Dorsolateral prefrontal cortex (tissue), 120 donors: ENCODE measurements at regions of chr19 and their contacts with region 1.

Region 1: DNA sequence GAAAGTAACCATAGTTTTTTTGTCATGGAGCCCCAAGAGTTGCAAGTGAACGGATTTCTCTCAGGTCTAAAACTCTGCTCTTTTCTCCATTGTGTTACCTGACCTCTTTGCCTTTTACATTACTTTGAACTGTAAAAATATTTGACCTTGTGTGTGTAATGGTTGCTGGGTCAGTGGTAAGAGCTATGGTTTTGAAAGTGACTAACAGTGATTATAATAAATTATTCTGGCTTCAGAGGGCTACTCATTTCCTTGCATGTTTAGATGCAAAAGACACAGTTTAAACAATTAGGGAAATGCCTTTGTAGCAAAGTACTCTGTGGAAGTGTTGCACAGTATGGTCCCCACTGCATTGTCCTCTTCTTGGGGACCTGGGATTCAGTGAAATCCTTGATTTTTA is 29.3 kb upstream of the PSG8 start:
- DNase-seq: no peak
- H3K4me3 ChIP-seq: no peak overlapping the region
- H3K27ac ChIP-seq: no peak overlapping the region
- H3K27me3 ChIP-seq: no peaks in the 10 kb centered on the region
- CTCF ChIP-seq: no peak

Region 2: GRCh38 chr19:42295831-42296525 is 498.8 kb before region 1 on chr19:
- intact Hi-C with region 1: no loop called
- DNase-seq: peak; percentile 79 to 90 (median 84)
- H3K4me3 ChIP-seq: no peak overlapping the region
- H3K27ac ChIP-seq: peak overlapping the region in 23 of 59 donors; percentile 3 to 68 (median 36)
- H3K27me3 ChIP-seq: no peaks in the 10 kb centered on the region
- CTCF ChIP-seq: peak; percentile 53 to 99 (median 92)

Region 3: GRCh38 chr19:42857561-42857901 is 62.8 kb after region 1 on chr19:
- intact Hi-C with region 1: loop called (anchors 1 to 2 kb)
- DNase-seq: no peak
- H3K4me3 ChIP-seq: no peak overlapping the region
- H3K27ac ChIP-seq: peak overlapping the region in 1 of 59 donors; percentile 16
- H3K27me3 ChIP-seq: no peaks in the 10 kb centered on the region
- CTCF ChIP-seq: peak in 12 of 56 donors; percentile 1 to 26 (median 8)

Region 4: DNA sequence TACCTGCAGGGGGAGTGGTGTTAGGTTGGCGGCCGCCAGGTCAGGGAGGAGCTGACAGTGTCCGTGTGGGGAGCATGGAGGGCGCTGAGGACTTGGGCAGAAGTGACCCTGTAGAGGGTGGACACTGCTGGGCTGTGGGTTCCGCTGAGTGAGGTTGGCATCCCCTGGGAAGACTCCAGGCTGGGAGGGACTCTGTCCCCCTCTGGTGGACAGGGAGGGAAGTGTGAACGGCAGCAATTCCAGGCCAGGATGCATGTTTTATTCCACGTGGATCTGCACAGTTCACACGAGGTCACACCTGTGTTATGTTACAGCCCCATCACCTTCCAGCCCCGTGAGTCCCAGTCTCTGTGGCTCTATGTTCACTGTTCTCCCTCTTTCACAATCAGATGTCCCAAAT is 86.5 kb after region 1 on chr19:
- intact Hi-C with region 1: loop called in 1 of 2 experiments (anchors 10 kb)
- DNase-seq: no peak
- H3K4me3 ChIP-seq: no peak overlapping the region
- H3K27ac ChIP-seq: no peak overlapping the region
- H3K27me3 ChIP-seq: no peaks in the 10 kb centered on the region
- CTCF ChIP-seq: peak in 34 of 56 donors; percentile 10 to 50 (median 31)

Region 5: GRCh38 chr19:43080186-43080585 is 285.4 kb after region 1 on chr19:
- intact Hi-C with region 1: loop called in 1 of 2 experiments (anchors 10 kb)
- DNase-seq: no peak
- H3K4me3 ChIP-seq: no peak overlapping the region
- H3K27ac ChIP-seq: no peak overlapping the region
- H3K27me3 ChIP-seq: no peaks in the 10 kb centered on the region
- CTCF ChIP-seq: no peak